ENCODE measurements at regions of chr10 and their contacts with region 1.

Region 1: GRCh38 chr10:92567952-92568600 is 5.8 kb downstream of the IDE start:
- DNase-seq: peak; percentile 72
- ATAC-seq: peak; percentile 48
- H3K4me3 ChIP-seq: no peak overlapping the region
- H3K27ac ChIP-seq: no peak overlapping the region
- H3K4me1 ChIP-seq: peaks cover 4% of the 10 kb centered on the region
- H3K27me3 ChIP-seq: no peaks in the 10 kb centered on the region
- CTCF ChIP-seq: no peak
- POLR2A ChIP-seq: no peak
- RAD21 ChIP-seq: no peak

Region 2: GRCh38 chr10:92523639-92524038 is 44.4 kb before region 1 on chr10:
- CTCF ChIA-PET with region 1: interaction called, 3 read pairs
- POLR2A ChIA-PET with region 1: no interaction called
- dilution Hi-C with region 1: no loop called
- in situ Hi-C with region 1: loop called (anchors 5 kb)
- intact Hi-C with region 1: no loop called
- DNase-seq: no peak
- ATAC-seq: no peak
- H3K4me3 ChIP-seq: no peak overlapping the region
- H3K27ac ChIP-seq: no peak overlapping the region
- H3K4me1 ChIP-seq: no peaks in the 10 kb centered on the region
- H3K27me3 ChIP-seq: no peaks in the 10 kb centered on the region
- CTCF ChIP-seq: no peak
- POLR2A ChIP-seq: no peak
- RAD21 ChIP-seq: no peak

Measured in IMR-90 (cell line).